ENCODE measurements at regions of chr19 and their contacts with region 1.

Region 1: DNA sequence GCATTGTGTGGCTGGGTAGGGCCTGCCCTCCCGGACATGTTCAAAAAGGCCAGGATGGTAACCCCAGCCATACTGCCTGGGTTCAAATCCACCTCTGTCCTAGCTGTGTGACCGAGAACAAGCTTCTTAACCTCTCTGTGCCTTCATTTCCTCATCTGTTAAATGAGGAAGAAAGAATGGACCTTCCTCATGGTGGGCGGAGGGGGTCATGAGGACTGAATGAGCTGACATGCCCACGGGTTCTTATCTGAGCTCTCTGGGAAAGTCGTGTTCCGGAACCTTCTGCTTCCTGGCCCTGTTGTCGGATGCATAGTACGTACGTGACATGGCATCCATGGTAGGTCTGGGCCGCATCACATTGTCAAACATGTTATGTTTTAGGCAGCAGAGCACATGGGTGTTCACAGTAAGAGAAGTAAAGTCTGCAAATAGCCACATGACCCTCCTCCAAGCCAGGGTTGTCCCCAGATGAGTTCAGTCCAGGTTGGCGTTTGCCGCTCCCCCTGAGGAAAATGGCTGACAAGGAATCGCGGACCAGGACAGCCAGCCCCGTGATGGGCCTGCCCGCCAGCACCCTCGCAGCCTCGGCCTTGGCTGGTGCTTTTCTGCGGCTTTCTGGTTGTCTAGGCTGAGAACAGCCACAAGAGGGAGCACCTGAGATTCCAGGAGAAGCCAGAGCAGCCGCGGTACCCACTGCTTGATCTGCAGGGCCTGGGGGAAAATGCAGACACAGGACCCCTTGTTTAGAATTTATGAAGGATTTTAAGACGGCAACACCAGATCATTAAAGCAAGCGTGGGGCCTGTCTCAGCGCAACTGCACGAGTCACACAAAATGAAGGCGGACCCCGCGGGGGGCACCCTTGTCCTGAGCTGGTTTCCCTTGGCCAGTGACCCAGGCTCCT is 2.4 kb upstream of the NTN5 start:
- DNase-seq: peak; percentile 12
- H3K4me3 ChIP-seq: no peak overlapping the region
- H3K27me3 ChIP-seq: no peaks in the 10 kb centered on the region; the same call in 1 of the 2 replicates
- CTCF ChIP-seq: peak; percentile 92

Region 2: DNA sequence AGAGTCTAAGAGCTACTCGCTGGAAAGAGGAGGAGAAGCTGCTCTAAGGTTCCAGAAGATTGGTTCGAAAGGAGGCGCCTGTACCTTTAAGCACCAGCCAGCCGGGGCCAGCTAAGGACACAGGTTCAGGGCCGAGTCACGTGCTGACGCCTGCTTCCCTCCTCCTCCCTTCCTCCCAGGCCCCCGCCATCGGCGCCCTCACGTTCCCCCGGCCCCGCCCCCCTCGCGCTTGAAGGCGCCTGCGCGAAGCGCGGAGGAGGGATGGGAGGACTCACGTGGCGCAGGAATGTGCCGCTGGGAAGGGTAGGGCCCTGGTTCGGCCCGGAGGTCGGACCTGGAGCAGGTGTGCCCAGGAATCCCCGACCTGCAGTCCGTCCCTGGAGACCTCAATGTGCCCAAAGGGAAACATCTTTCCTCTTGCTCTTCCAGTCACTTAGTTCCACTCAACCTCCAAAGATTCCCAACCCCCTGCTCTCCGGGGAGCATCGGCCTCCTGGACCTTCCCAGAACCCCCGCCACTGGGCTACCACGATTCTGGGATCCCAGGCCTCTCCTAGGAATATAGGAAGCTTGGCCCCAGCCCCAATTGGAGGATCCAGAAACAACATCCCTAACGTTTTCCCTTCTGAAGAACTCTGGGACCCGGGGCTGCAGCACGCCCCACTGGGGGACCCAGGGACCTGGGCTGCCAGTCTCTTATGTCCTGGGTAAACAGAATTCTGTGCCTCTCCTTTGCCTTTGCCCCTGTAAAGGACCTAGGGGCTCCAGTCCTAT is 40.6 kb before region 1 on chr19:
- CTCF ChIA-PET with region 1: no interaction called
- POLR2A ChIA-PET with region 1: no interaction called
- DNase-seq: peak; percentile 66
- H3K4me3 ChIP-seq: peak overlapping the region; percentile 65
- H3K27me3 ChIP-seq: peaks cover 1% of the 10 kb centered on the region; the same call in 1 of the 2 replicates
- CTCF ChIP-seq: no peak

Region 3: GRCh38 chr19:48646001-48646721 is 29.0 kb before region 1 on chr19 and contains the start of gene CA11:
- CTCF ChIA-PET with region 1: interaction called, 10 read pairs
- POLR2A ChIA-PET with region 1: no interaction called
- DNase-seq: no peak
- H3K4me3 ChIP-seq: peak within 1 kb of the TSS; percentile 47
- H3K27me3 ChIP-seq: no peaks in the 10 kb centered on the region
- CTCF ChIP-seq: peak; percentile 94
- polyA plus RNA-seq, gene CA11: 3.0 and 3.2 TPM in 2 replicates

Region 4: GRCh38 chr19:48685583-48685982 is 10.4 kb after region 1 on chr19:
- CTCF ChIA-PET with region 1: interaction called, 13 read pairs
- POLR2A ChIA-PET with region 1: no interaction called
- DNase-seq: no peak
- H3K4me3 ChIP-seq: no peak overlapping the region
- H3K27me3 ChIP-seq: no peaks in the 10 kb centered on the region; the same call in 1 of the 2 replicates
- CTCF ChIP-seq: no peak

Region 5: DNA sequence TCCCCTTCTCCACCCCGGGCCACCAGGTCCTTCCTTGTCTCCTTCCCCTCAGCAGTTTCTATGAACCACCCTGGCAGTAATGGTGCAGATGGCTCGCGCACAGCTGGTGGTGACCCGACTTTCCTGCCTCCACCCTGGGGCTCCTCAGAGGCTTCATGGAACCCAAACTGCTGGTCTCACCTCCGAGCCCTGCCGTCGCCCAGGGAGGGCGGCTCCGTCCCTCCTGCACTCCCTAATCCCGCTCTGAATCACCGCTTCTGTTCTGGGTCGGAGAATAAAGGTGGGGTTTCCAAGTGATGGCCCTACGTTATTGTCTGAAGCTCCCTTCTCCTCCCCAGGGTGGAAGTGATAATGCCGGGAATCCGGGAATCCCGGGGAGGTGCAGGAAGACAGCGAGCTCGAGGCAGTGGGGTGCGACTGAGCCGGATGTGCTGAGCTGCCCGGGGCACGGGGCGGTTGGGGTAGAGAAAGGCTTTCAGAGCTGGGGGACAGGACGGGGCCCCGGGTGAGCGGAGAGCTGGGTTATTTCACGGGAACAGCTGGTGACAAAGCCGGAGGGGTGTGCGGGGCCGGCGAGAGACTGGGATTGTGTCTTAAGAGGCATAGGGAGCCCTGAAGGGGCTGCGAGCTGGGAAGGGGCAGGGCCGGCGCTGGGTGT is 21.3 kb after region 1 on chr19:
- CTCF ChIA-PET with region 1: interaction called, 11 read pairs
- POLR2A ChIA-PET with region 1: no interaction called
- DNase-seq: no peak
- H3K4me3 ChIP-seq: no peak overlapping the region
- H3K27me3 ChIP-seq: peaks cover 3% of the 10 kb centered on the region
- CTCF ChIP-seq: no peak

Region 6: GRCh38 chr19:48713864-48714758 is 38.9 kb after region 1 on chr19:
- CTCF ChIA-PET with region 1: interaction called, 22 read pairs
- POLR2A ChIA-PET with region 1: no interaction called
- DNase-seq: peak; percentile 98
- H3K4me3 ChIP-seq: peak overlapping the region; percentile 70
- H3K27me3 ChIP-seq: no peaks in the 10 kb centered on the region
- CTCF ChIP-seq: no peak

Region 7: DNA sequence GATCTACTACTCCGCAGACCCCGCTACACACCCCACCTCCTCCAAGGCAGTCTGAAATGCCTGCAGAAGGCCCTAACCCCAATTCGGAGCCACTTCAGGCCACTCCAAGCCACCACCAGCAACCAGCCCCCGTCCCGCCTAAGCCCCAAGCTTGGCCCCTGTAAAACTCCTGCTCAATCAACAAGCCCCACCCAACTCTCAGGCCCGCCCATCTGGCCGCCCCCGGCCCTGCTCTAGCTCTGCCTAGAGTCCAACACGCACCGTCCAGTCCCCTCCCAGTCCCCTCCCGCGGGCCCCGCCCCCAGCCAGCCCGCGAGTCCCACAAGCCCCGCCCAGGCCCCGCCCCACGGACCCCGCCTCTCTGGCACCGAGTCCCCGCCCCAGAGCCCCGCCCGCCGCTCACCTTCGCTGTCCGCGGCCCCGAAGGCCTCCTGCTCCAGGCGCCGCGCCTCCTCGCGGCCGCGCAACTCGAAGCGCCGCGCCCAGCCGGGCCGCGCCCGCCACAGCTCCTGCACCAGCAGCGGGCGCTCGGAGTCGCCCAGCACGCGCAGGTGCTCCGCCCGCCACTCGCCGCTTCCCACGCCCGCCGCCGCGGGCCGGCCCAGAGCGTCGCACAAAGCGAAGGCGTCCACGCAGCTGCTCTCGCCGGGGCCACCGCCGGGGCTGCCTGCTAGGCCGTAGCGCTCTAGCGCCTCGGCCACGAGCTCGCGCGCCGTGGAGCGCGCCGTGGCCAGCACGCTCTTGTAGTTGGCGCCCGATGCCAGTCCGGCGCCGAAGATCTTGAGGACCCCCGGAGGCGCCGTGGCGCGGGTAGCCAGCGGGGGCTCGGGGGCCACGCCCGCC is 63.6 kb after region 1 on chr19:
- CTCF ChIA-PET with region 1: interaction called, 17 read pairs
- POLR2A ChIA-PET with region 1: no interaction called
- DNase-seq: peak; percentile 19
- H3K4me3 ChIP-seq: peak overlapping the region; percentile 44
- H3K27me3 ChIP-seq: no peaks in the 10 kb centered on the region
- CTCF ChIP-seq: no peak